CD4-positive, alpha-beta T cell (primary cell): ENCODE measurements at regions of chr13 and their contacts with region 1.

Region 1: DNA sequence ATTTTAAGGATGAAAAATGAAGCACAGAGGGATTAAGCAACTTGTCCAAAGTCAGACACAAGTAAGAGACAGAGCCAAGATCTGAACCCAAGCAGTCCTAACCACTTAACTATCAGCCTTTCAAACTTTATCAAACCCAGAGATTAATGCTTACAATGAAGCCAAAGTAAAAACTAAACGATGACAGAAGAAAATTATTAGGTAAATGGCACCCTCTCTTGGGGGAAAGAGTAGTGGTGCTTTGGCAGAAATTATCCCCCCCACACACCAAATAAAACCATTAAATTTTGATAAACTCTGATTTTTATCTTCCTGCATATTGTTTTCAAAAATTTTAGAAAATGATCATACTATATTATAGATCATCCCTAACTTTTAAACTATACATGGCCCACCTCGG is 329.2 kb downstream of the SLC7A1 start:
- DNase-seq: peak in 3 of 14 experiments; percentile 4 to 10 (median 6)
- ATAC-seq: no peak
- H3K4me3 ChIP-seq: no peak overlapping the region
- H3K4me3 Mint-ChIP-seq: no peak overlapping the region
- H3K27ac ChIP-seq: no peak overlapping the region
- H3K27ac Mint-ChIP-seq: no peak overlapping the region
- H3K4me1 ChIP-seq: no peaks in the 10 kb centered on the region
- H3K4me1 Mint-ChIP-seq: no peaks in the 10 kb centered on the region
- H3K27me3 ChIP-seq: no peaks in the 10 kb centered on the region
- H3K27me3 Mint-ChIP-seq: no peaks in the 10 kb centered on the region
- CTCF ChIP-seq: no peak

Region 2: DNA sequence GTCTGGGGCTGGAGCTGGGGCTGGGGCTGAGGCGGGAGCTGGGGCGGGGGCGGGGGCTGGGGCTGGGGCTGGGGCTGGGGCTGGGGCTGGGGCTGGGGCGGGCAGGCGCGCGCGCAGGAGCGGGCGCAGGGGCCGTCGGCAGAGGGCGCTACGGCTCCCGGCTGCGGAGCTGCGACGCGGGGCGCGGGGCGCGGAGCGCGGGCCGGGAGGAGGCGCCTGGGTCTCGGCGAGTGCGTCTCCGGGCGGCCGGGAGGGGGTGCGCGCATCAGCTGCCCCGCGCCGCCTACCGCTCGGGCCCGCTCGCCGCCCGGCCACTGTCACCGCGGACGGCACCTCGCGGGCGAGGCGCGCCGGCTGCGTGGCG is 446.5 kb before region 1 on chr13:
- CTCF ChIA-PET with region 1: no interaction called
- POLR2A ChIA-PET with region 1: no interaction called
- intact Hi-C with region 1: loop called in 1 of 2 experiments (anchors 5 kb)
- DNase-seq: peak in 12 of 14 experiments; percentile 6 to 74 (median 36)
- ATAC-seq: peak; percentile 65
- H3K4me3 ChIP-seq: no peak overlapping the region
- H3K4me3 Mint-ChIP-seq: no peak overlapping the region
- H3K27ac ChIP-seq: no peak overlapping the region
- H3K27ac Mint-ChIP-seq: no peak overlapping the region
- H3K4me1 ChIP-seq: peaks cover 11% of the 10 kb centered on the region
- H3K4me1 Mint-ChIP-seq: peaks cover 4% of the 10 kb centered on the region
- H3K27me3 ChIP-seq: peaks cover 17 to 48% of the 10 kb centered on the region in 2 experiments
- H3K27me3 Mint-ChIP-seq: peaks cover 67% of the 10 kb centered on the region
- CTCF ChIP-seq: no peak